Left colon (tissue), 2 donors: ENCODE measurements at regions of chr9 and their contacts with region 1.

Region 1: DNA sequence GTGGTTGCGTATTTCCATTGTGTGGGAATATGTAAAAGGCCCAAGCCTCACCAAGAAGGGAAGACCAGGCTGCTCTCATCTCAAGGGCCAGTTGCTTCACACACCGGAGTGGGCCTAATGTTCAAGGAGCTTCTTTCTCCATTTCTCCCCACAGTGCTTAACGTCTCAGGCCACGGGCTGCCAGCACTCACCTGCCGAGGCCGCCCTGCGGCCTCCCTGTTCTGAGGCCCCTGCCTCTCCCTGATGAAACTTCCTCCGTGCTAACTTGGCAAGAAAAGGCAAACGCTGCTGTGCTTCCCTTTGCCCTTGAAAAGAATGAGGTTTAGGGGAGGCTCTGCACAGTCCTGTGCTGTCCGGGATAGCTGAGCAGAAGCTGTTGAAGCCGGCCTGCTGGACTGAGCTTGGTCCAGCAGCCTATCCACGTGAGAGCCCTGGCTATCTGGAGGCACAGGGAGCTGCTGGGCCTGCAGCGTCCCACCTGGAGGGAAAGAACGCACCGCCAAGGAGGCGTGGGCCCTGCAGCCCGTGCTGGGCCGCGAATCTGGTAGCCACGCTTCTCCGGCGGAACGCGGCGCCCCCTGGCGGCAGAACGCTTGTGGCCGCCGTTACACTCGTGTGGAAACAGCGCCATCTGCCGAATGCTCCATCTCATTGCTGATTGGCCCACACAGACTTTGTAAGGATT is 73.5 kb upstream of the PRSS3 start:
- DNase-seq: peak; percentile 62 to 92
- ATAC-seq: peak; percentile 88

Region 2: DNA sequence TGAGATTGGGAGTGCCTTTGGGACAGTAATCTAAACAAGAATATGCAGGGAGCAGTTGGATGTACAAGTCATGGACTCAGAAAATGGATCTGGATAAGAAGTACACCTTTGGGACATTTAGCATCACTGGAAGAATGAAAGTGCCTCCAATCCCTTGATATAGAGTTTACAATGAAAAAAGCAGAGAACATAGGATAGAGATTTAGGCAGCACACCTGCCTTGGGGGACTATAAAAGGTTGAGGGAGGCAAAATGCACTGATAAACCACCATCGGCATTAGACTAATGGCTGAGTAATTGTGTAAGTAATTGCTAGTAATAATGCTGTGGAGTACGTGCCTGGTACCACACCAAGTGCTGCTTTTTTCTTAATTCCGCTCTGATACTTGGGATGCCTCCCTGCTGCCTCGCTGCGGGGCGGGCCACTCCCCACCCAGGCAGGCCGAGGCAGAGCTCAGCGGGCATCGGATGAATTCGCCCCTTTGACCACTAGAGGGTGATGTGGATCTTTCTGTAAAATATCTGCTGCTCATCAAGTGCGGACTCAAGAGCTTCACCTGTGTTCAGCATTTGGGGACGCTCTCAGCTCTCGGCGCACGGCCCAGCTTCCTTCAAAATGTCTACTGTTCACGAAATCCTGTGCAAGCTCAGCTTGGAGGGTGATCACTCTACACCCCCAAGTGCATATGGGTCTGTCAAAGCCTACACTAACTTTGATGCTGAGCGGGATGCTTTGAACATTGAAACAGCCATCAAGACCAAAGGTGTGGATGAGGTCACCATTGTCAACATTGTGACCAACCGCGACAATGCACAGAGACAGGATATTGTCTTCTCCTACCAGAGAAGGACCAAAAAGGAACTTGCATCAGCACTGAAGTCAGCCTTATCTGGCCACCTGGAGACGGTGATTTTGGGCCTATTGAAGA is 97.9 kb before region 1 on chr9:
- intact Hi-C with region 1: loop called (anchors 5 to 10 kb)
- DNase-seq: peak in 1 of 2 donors; percentile 66
- ATAC-seq: peak; percentile 93